Endothelial cell of umbilical vein (primary cell): ENCODE measurements at regions of chr2 and their contacts with region 1.

Region 1: GRCh38 chr2:217785544-217786045 is 217.2 kb downstream of the TNS1 start:
- DNase-seq: peak; percentile 73
- H3K4me3 ChIP-seq: no peak overlapping the region
- H3K27ac ChIP-seq: no peak overlapping the region
- H3K4me1 ChIP-seq: no peaks in the 10 kb centered on the region
- H3K27me3 ChIP-seq: peaks cover 1 to 4% of the 10 kb centered on the region in 2 experiments
- CTCF ChIP-seq: peak; percentile 90 to 95
- POLR2A ChIP-seq: no peak

Region 2: DNA sequence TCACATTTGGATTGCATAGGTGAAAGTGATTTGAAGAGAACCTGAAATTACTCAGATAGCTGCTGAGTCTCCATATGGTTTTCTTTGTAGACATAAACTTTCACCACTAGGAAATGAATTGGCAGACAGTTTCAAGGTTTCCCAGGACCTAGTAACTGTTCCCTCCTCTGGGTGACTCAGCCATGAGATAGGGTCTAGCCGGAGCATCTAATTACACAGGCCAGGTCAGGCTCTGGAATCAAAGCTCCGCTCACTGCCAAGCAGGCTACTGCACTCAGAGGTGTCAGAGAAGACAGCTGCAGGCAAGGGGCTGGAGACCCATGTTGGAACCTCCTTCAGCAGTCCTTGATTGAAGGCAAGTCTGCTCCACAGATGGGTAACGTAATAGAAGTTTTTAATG is 212.0 kb before region 1 on chr2:
- CTCF ChIA-PET with region 1: no interaction called
- POLR2A ChIA-PET with region 1: no interaction called
- dilution Hi-C with region 1: no loop called
- intact Hi-C with region 1: no loop called
- DNase-seq: no peak
- H3K4me3 ChIP-seq: no peak overlapping the region
- H3K27ac ChIP-seq: no peak overlapping the region
- H3K4me1 ChIP-seq: no peaks in the 10 kb centered on the region
- H3K27me3 ChIP-seq: no peaks in the 10 kb centered on the region
- CTCF ChIP-seq: no peak
- POLR2A ChIP-seq: no peak

Region 3: DNA sequence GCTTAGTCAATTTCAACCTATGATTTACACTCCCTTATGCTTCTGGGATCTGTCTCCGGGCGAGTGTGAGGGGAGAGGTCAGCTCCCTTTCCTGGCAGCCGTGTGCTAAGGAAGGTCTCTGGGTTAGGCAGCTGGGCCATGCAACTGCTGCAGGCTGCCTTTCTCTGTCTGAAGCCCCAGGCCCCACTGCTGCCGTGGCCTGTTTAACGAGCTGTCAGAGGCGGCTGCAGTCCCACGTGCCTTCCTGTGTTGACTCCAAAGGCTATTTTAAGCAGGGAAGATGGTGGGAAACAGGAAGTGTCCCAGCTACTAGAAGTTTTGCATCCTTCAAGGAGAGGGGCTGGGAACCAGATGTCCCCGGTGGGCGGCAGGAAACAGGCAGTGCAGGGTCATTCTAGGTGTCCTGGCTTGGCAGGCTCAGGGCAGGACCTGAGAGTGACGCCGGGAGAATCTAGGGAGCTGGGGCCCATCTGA is 30.8 kb after region 1 on chr2:
- CTCF ChIA-PET with region 1: interaction called, 5 read pairs
- POLR2A ChIA-PET with region 1: no interaction called
- dilution Hi-C with region 1: no loop called
- intact Hi-C with region 1: loop called (anchors 1 kb)
- DNase-seq: peak; percentile 96
- H3K4me3 ChIP-seq: no peak overlapping the region
- H3K27ac ChIP-seq: peak overlapping the region; percentile 88
- H3K4me1 ChIP-seq: peaks cover 36% of the 10 kb centered on the region
- H3K27me3 ChIP-seq: no peaks in the 10 kb centered on the region
- CTCF ChIP-seq: no peak
- POLR2A ChIP-seq: no peak

Region 4: DNA sequence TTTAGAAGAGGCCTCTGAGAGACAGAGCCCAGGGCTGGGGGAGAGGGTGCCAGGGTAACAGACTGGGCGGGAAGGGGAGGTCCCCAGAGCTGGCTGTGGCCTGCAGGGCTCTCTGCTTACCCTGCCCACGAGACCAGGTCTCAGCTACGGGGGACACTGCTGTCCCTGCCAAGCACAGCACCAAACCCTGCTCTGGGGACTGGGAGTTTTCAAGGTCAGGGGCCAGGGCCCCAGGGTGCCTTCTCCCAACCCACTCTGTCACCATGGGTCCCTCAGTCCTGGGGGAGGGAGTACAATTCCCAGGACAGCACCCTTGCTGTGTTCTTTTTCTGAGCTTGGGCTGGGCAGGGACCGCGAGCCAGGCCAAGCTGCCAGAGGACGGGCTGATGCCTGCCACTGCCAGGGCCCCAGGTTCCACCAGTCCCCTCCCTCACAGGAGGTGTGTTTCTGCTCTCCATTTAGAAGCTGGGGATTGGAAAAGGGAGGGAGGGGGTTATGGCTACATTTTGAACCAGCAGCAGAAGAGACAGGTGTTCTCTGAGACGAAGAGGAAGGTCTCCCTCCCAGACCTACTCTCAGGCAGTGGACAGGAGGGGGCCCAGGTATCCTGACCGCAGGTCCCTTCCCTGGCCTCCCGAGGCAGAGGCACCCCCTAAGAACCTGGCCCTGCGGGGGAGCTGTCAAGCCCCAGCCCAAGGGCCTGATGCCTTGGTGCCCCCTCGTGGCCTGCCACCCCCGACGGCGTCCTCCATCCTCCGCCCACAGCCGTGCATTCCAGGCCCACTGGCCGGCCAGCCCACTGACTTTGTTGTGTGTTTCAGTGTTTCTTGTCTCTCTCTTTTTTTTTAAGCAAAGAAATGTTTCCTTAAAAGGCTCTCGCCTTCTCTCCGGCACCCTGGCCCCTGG is 136.8 kb after region 1 on chr2:
- CTCF ChIA-PET with region 1: interaction called, 4 read pairs
- POLR2A ChIA-PET with region 1: no interaction called
- dilution Hi-C with region 1: no loop called
- intact Hi-C with region 1: loop called (anchors 1 kb)
- DNase-seq: no peak
- H3K4me3 ChIP-seq: no peak overlapping the region
- H3K27ac ChIP-seq: no peak overlapping the region
- H3K4me1 ChIP-seq: peaks cover 16% of the 10 kb centered on the region
- H3K27me3 ChIP-seq: no peaks in the 10 kb centered on the region
- CTCF ChIP-seq: peak in 1 of 2 donors; percentile 32
- POLR2A ChIP-seq: no peak

Region 5: DNA sequence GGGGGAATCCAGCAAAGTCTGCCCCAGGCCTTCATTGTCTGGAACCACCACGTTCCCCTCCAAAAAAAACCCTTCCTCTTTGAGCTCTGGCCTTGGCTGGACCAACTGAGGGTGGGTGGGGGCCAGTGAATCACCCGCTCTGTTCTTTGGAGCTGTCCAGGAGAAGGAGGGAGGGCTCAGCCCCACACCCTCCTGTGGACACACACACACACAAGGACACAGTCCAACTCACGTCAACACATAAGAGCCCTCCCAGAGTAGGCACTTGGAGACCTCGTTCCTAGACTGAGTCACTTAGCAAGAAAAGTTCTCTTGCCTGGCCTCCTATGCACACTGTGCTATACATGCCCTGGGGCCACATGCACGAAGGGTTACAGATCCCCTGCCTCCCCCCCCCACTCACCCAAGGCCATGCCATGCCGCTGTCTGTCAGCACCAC is 218.4 kb after region 1 on chr2:
- CTCF ChIA-PET with region 1: interaction called, 22 read pairs
- POLR2A ChIA-PET with region 1: no interaction called
- dilution Hi-C with region 1: no loop called
- intact Hi-C with region 1: no loop called
- DNase-seq: no peak
- H3K4me3 ChIP-seq: no peak overlapping the region
- H3K27ac ChIP-seq: no peak overlapping the region
- H3K4me1 ChIP-seq: peaks cover 11% of the 10 kb centered on the region
- H3K27me3 ChIP-seq: no peaks in the 10 kb centered on the region
- CTCF ChIP-seq: no peak
- POLR2A ChIP-seq: no peak

Region 6: DNA sequence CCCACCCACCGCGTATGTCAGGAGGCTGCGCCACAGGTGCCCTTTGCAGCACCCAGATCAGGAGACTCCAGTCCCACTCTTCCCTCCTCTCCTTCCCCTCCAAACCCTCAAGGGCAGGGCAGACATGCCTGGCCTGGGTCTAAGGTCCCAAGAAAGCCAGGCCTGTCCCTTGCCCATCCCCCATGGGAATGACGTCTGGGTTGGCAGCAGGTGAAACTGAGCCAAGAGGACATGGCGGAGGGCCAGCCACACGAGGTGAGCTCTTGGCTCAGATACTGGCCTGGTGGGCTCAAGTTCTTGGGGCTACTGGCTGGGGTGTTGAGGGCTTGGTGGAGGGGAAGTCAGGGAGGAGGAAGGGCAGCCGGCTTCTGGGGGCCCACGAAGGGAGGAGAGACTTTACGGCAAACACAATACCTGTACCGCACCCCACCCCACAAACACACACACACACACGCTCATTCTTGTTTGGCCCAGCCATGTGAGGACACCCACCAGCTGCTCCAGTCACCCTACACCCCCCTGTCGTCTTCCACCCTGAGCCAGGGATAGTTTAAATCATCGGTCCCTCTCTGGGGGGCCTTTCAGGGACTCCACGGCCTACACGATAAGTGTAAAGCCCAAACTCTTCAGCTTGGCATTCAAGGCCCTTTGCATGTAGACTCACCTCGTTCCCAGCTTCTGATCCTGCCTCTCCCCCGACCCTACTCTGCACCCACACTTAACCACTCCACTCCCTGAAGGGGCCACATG is 241.3 kb after region 1 on chr2:
- CTCF ChIA-PET with region 1: interaction called, 341 read pairs
- POLR2A ChIA-PET with region 1: no interaction called
- dilution Hi-C with region 1: no loop called
- intact Hi-C with region 1: no loop called
- DNase-seq: no peak
- H3K4me3 ChIP-seq: no peak overlapping the region
- H3K27ac ChIP-seq: no peak overlapping the region
- H3K4me1 ChIP-seq: no peaks in the 10 kb centered on the region
- H3K27me3 ChIP-seq: peaks cover 0 to 10% of the 10 kb centered on the region in 2 experiments
- CTCF ChIP-seq: no peak
- POLR2A ChIP-seq: no peak

Region 7: DNA sequence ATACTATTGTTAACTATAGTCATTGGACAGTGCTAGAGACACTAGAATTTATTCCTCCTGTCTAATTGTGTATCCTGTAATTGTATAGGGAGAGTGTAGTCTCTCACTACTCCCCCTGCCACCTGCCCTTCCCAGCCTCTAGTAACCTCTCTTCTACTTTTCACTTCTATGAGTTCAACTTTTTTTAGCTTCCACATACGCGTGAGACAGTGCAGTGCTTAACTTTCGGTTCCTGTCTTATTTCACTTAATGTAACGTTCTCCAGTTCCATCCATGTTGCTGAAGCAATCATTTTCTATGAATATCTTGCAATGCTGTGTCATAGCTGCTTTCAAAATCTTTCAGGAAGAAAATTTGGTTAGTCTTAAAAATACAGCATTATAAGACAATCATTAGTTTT is 260.6 kb after region 1 on chr2:
- CTCF ChIA-PET with region 1: interaction called, 43 read pairs
- POLR2A ChIA-PET with region 1: no interaction called
- dilution Hi-C with region 1: no loop called
- intact Hi-C with region 1: no loop called
- DNase-seq: no peak
- H3K4me3 ChIP-seq: no peak overlapping the region
- H3K27ac ChIP-seq: no peak overlapping the region
- H3K4me1 ChIP-seq: no peaks in the 10 kb centered on the region
- H3K27me3 ChIP-seq: peaks cover 6 to 13% of the 10 kb centered on the region in 2 experiments
- CTCF ChIP-seq: no peak
- POLR2A ChIP-seq: no peak

Region 8: GRCh38 chr2:218081063-218081462 is 295.5 kb after region 1 on chr2:
- CTCF ChIA-PET with region 1: interaction called, 22 read pairs
- POLR2A ChIA-PET with region 1: no interaction called
- dilution Hi-C with region 1: no loop called
- intact Hi-C with region 1: no loop called
- DNase-seq: no peak
- H3K4me3 ChIP-seq: no peak overlapping the region
- H3K27ac ChIP-seq: no peak overlapping the region
- H3K4me1 ChIP-seq: no peaks in the 10 kb centered on the region
- H3K27me3 ChIP-seq: peaks cover 0 to 4% of the 10 kb centered on the region in 2 experiments
- CTCF ChIP-seq: no peak
- POLR2A ChIP-seq: no peak